H1 (cell line): ENCODE measurements at regions of chr2 and their contacts with region 1.

Region 1: DNA sequence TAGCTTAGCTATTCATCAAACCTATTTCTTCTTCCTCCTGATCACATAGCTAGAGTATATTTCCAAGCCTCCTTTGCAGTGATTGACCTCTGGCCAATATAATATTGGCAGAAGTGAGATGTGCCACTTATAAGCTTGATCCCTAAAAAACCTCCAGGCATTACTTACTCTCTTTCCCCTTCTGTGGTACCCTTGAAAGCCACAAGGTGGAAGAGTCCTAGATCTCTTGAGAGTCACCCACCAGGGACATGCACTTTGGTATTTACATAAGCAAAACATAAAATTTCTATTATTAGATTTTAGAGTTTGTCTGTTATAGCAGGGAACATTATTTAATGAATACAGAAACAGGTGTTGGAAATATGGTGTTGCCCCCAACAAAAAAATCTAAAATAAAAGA is 112.0 kb downstream of the EXOC6B start:
- DNase-seq: no peak
- H3K4me3 ChIP-seq: no peak overlapping the region
- H3K27ac ChIP-seq: no peak overlapping the region
- H3K4me1 ChIP-seq: peaks cover 0 to 3% (median under 1%) of the 10 kb centered on the region in 4 experiments; a peak in 2 of 7 replicates
- H3K27me3 ChIP-seq: no peaks in the 10 kb centered on the region
- CTCF ChIP-seq: peak in 2 of 3 experiments; percentile 15 to 40; a peak in 3 of 4 replicates
- EP300 ChIP-seq: no peak
- POLR2A ChIP-seq: no peak
- RAD21 ChIP-seq: peak; percentile 32 to 35; a peak in 3 of 4 replicates

Region 2: GRCh38 chr2:72668647-72669046 is 45.2 kb before region 1 on chr2:
- CTCF ChIA-PET with region 1: no interaction called
- POLR2A ChIA-PET with region 1: no interaction called
- DNase-seq: no peak
- H3K4me3 ChIP-seq: no peak overlapping the region
- H3K27ac ChIP-seq: no peak overlapping the region
- H3K4me1 ChIP-seq: no peaks in the 10 kb centered on the region
- H3K27me3 ChIP-seq: no peaks in the 10 kb centered on the region
- CTCF ChIP-seq: no peak
- EP300 ChIP-seq: no peak
- POLR2A ChIP-seq: no peak
- RAD21 ChIP-seq: no peak

Region 3: DNA sequence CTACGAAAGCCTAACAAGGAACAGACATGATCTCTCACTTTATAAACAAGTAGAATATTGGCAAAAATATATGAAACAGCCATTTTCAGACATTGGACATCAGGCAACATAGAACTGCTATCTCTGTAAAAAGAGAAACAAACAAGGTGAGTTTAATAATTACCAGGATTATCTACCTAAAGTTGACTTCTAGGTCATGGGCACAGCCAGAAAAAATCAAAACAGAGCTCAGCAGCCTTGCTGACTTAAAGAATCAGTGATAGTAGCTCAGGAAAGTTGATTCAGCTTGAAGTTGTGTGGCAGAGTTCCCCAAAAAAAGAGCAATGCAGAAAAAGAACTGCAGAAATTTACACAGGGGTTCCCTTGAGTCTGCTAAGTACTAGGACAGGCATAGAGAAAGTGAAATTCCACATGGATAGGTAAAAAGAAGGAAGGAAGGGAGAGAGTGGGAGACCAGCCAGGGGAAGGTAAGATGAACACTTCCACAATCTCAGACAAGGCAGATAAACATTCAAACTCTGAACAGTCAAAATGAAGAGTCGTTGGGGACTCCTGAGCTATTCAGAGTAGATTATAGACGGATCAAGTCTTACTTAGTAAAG is 10.0 kb after region 1 on chr2:
- CTCF ChIA-PET with region 1: interaction called, 12 read pairs
- POLR2A ChIA-PET with region 1: no interaction called
- DNase-seq: no peak
- H3K4me3 ChIP-seq: no peak overlapping the region
- H3K27ac ChIP-seq: no peak overlapping the region
- H3K4me1 ChIP-seq: peaks cover 0 to 6% (median under 1%) of the 10 kb centered on the region in 4 experiments; a peak in 2 of 7 replicates
- H3K27me3 ChIP-seq: no peaks in the 10 kb centered on the region
- CTCF ChIP-seq: no peak
- EP300 ChIP-seq: no peak
- POLR2A ChIP-seq: no peak
- RAD21 ChIP-seq: no peak

Region 4: DNA sequence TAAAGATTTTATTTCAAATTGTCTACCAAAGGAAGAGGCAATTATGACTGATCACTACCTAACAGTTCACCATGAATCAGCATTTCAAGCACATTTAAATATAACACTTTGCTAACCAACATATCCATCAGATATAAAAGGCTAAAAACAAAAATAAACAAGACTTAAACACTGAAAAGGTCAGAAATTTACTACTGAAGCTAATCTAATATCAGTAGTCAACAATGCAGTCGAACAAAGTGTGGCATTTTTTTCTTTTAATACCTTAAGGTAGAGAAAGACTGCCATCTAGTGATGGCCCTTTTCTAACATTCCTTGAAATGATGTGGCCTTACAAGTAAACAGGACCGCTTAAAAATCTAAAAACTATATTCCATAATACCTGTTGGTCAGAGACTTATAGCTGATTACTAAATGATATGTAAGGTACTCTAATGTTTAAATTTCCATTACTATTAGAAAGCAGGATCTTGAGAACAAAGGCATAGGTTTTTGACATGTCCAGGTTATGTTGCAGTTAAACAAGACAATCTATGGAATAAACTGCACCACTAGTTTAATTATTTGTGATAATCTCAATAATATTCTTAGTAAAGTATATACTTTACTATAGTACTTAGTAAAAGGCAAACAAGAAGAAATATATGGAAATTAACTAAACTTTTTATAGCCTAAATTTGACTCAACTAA is 32.0 kb after region 1 on chr2:
- CTCF ChIA-PET with region 1: interaction called, 28 read pairs
- POLR2A ChIA-PET with region 1: no interaction called
- DNase-seq: no peak
- H3K4me3 ChIP-seq: no peak overlapping the region
- H3K27ac ChIP-seq: no peak overlapping the region
- H3K4me1 ChIP-seq: peaks cover 0 to 3% (median 1%) of the 10 kb centered on the region in 4 experiments; a peak in 2 of 7 replicates
- H3K27me3 ChIP-seq: no peaks in the 10 kb centered on the region
- CTCF ChIP-seq: peak in 2 of 3 experiments; percentile 47 to 50; a peak in 2 of 4 replicates
- EP300 ChIP-seq: no peak
- POLR2A ChIP-seq: no peak
- RAD21 ChIP-seq: peak; percentile 75 to 82